GM13976 (cell line): ENCODE measurements at regions of chr17 and their contacts with region 1.

Region 1: DNA sequence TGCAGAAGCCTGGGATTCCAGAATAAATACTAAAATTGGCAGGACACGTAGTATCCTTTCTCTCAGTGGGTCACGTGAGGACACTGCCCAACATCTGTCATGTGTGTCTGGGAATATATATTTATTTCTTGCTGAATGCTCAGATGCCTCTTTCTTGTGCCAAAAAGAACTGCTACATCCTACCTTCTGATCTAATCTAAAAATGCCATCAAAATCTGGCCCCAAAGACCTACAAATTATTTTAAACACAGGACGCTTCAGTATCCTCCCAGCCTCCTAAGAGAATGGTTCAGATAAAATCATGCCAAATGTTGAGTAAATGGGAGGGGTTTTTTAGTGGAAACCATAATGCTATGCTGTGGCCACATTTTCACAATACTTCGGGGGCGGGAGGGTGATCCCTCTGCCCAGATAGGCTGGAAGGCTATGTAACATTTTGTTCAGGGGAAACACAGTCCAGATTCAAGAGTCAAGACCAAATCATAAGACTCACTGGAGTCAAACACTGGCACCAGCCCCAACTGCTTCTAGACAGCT is 22.9 kb upstream of the CORO6 start:
- DNase-seq: no peak
- CTCF ChIP-seq: no peak

Region 2: GRCh38 chr17:29568331-29569244 is 77.0 kb before region 1 on chr17 and contains the start of gene TP53I13:
- in situ Hi-C with region 1: no loop called
- DNase-seq: peak; percentile 92
- CTCF ChIP-seq: no peak

Region 3: DNA sequence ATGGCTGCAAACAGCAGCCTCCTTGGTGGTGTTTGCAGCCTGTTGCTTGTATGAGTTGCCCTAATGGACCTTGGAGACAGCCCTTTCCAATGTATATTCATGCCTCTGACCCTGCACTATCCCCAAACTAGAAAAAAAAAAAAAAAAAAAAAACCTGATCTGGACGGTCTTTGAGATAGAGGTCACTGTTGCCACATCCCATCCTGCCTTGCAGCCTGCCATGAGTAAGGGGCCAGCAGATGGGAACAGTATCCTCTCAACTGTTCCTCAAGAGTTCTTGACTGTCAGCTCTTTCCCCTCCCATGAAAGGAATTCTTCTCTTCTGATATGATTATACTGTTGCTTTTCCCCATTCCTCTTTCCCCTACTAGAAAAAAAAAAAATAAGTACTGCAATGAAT is 132.1 kb after region 1 on chr17:
- in situ Hi-C with region 1: loop called (anchors 5 kb)
- DNase-seq: no peak
- CTCF ChIP-seq: no peak

Region 4: GRCh38 chr17:29931231-29931932 is 285.8 kb after region 1 on chr17:
- in situ Hi-C with region 1: loop called (anchors 25 kb)
- DNase-seq: peak; percentile 63
- CTCF ChIP-seq: peak; percentile 70